ENCODE measurements at regions of chr7 and their contacts with region 1.

Region 1: DNA sequence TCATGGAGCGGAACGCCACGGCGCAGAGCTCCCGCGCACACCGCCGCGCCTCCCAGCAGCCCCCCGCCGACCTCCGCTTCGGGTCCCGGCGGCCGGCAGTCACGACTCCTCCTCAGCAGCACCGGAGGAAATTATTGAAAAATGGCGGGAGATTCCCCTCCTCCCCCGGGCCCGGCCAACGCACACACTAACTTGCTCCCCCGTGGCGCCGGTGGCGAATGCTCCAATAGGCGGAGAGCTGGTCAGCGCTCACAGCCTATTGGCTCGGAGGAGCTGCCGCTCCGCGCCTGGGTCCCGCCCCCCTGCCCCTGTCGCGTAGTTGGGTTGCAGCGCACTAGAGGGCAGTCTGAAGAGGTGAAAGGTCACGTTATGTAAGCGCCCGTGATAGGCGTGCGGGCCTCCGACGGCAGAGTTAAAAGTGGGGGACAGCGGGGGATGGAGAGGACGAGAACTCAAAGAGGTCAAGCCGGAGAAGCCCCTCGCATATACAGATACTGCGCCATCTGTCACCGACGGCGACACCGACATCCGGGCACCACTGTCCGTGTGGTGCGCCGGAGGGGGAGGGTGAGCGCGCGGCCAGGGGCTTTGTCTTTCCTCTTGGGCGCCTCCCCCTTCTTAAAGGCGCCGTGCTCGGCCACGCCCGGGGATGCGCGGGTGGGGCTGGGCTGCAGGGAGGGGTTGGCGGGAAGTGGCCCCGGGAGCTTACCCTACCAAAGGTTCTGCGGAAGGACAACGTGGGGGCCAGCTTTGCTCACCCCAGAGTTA is at the start of gene BAZ1B:
- DNase-seq: peak; percentile 87 to 97 (median 93)
- ATAC-seq: peak; percentile 92 to 95 (median 94)
- H3K4me3 ChIP-seq: peak within 1 kb of the TSS; percentile 74 to 81
- H3K4me3 Mint-ChIP-seq: peak within 1 kb of the TSS; percentile 89 to 94 (median 93)
- H3K27ac ChIP-seq: peak within 1 kb of the TSS; percentile 96
- H3K27ac Mint-ChIP-seq: peak within 1 kb of the TSS; percentile 98 to 100
- H3K4me1 ChIP-seq: peaks cover 42 to 63% of the 10 kb centered on the region in 2 experiments
- H3K4me1 Mint-ChIP-seq: peaks cover 67 to 72% (median 71%) of the 10 kb centered on the region in 3 donors
- H3K27me3 ChIP-seq: no peaks in the 10 kb centered on the region
- H3K27me3 Mint-ChIP-seq: no peaks in the 10 kb centered on the region
- total RNA-seq, gene BAZ1B: 57.1 to 64.5 (median 63.0) TPM

Region 2: DNA sequence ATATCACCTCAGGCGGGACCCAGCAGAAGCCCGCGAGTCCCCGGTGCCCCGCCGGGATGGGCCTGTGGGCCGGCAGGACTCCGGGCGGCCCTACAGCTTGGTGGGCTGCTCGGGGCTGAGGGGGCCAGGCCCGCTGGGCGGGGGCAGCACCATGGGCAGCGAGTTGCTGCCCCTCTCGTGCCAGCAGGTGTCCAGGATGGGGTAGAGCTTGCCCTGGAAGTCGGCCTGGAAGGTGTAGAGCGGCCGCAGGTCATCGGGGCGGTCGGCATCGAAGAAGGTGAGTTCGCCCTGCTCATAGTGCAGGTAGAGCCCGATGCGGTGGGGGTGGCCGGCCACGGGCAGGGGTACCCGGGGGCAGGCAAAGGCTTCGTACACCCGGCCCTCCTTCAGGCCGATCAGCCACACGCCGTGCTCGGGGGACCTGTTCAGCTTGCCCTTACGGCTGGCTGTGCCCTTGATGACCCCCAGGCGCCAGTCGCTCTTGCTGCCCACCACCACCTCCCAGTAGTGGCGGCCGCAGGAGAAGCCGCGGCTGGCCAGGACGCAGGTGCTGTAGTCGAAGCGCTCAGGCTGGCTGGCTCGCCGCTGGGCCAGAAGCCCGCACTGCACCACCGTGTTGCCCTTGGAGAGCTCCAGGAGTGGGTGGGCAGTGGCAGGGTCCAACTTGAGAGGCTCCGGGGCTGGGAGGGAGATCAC is 209.3 kb before region 1 on chr7:
- CTCF ChIA-PET with region 1: no interaction called
- POLR2A ChIA-PET with region 1: no interaction called
- DNase-seq: no peak
- ATAC-seq: no peak
- H3K4me3 ChIP-seq: no peak overlapping the region
- H3K4me3 Mint-ChIP-seq: no peak overlapping the region
- H3K27ac ChIP-seq: no peak overlapping the region
- H3K27ac Mint-ChIP-seq: no peak overlapping the region
- H3K4me1 ChIP-seq: peaks cover 0 to 14% of the 10 kb centered on the region in 2 experiments
- H3K4me1 Mint-ChIP-seq: peaks cover 13 to 19% (median 16%) of the 10 kb centered on the region in 3 donors
- H3K27me3 ChIP-seq: peaks cover 0 to 2% of the 10 kb centered on the region in 2 experiments
- H3K27me3 Mint-ChIP-seq: no peaks in the 10 kb centered on the region

Region 3: GRCh38 chr7:73578342-73579127 is 56.2 kb after region 1 on chr7 and contains the start of gene TBL2:
- CTCF ChIA-PET with region 1: interaction called in 1 of 2 experiments, 5 read pairs
- POLR2A ChIA-PET with region 1: interaction called in 1 of 2 experiments, 10 read pairs
- DNase-seq: peak; percentile 97 to 99 (median 99)
- ATAC-seq: peak; percentile 89 to 96 (median 90)
- H3K4me3 ChIP-seq: peak within 1 kb of the TSS; percentile 85 to 90
- H3K4me3 Mint-ChIP-seq: peak within 1 kb of the TSS; percentile 94 to 99 (median 95)
- H3K27ac ChIP-seq: peak within 1 kb of the TSS; percentile 84
- H3K27ac Mint-ChIP-seq: peak within 1 kb of the TSS; percentile 99 to 100
- H3K4me1 ChIP-seq: peaks cover 10 to 27% of the 10 kb centered on the region in 2 experiments
- H3K4me1 Mint-ChIP-seq: peaks cover 17 to 31% (median 27%) of the 10 kb centered on the region in 3 donors
- H3K27me3 ChIP-seq: no peaks in the 10 kb centered on the region
- H3K27me3 Mint-ChIP-seq: no peaks in the 10 kb centered on the region
- total RNA-seq, gene TBL2: 14.8 to 38.5 (median 31.6) TPM

Region 4: GRCh38 chr7:73638911-73639310 is 116.6 kb after region 1 on chr7:
- CTCF ChIA-PET with region 1: no interaction called
- POLR2A ChIA-PET with region 1: interaction called in 1 of 2 experiments, 11 read pairs
- DNase-seq: no peak
- ATAC-seq: no peak
- H3K4me3 ChIP-seq: no peak overlapping the region
- H3K4me3 Mint-ChIP-seq: no peak overlapping the region
- H3K27ac ChIP-seq: no peak overlapping the region
- H3K27ac Mint-ChIP-seq: no peak overlapping the region
- H3K4me1 ChIP-seq: no peaks in the 10 kb centered on the region
- H3K4me1 Mint-ChIP-seq: no peaks in the 10 kb centered on the region
- H3K27me3 ChIP-seq: peaks cover 0 to 44% of the 10 kb centered on the region in 2 experiments
- H3K27me3 Mint-ChIP-seq: peaks cover 12 to 30% of the 10 kb centered on the region in 2 donors

Region 5: DNA sequence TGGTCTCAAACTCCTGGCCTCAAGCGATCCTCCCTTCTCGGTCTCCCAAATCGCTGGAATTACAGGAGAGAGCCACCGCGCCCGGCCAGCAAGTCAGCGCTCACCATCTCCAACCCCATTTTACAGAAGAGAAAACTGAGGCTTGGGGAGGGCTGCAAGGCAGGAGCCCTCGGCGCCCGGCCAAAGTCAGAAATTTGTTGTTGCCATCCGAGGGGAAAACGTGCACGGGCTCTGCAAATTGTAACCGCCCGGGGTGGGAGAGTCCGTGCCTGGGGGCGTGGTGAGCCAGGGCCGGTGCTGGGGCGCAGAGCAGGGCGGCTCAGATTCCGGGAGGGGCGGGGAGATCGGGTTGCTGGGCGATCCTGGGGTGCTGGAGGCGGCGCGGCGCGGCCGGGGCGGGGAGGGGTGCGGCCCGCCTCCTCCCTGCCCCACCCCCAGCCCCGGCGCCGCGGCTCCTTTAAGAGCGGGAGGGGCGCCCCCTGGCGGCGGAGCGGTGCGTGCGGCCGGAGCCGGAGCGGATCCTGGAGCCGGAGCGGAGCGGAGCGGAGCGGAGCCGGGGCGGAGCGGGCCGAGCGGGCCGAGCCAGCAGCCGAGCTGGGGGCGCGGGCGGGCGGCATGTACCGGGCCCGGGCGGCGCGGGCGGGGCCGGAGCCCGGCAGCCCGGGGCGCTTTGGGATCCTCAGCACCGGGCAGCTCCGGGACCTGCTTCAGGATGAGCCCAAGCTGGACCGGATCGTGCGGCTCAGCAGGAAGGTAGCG is 145.2 kb after region 1 on chr7 and contains the start of gene VPS37D:
- CTCF ChIA-PET with region 1: no interaction called
- POLR2A ChIA-PET with region 1: interaction called in 1 of 2 experiments, 10 read pairs
- DNase-seq: peak; percentile 74 to 97 (median 89)
- ATAC-seq: peak; percentile 94 to 96 (median 95)
- H3K4me3 ChIP-seq: peak within 1 kb of the TSS; percentile 43 to 51
- H3K4me3 Mint-ChIP-seq: peak within 1 kb of the TSS; percentile 61 to 74 (median 71)
- H3K27ac ChIP-seq: no peak within 1 kb of the TSS
- H3K27ac Mint-ChIP-seq: peak within 1 kb of the TSS in 1 of 2 donors; percentile 55
- H3K4me1 ChIP-seq: peaks cover 0 to 12% of the 10 kb centered on the region in 2 experiments
- H3K4me1 Mint-ChIP-seq: peaks cover 5 to 13% (median 12%) of the 10 kb centered on the region in 3 donors
- H3K27me3 ChIP-seq: peaks cover 4 to 74% of the 10 kb centered on the region in 2 experiments
- H3K27me3 Mint-ChIP-seq: peaks cover 26 to 47% of the 10 kb centered on the region in 2 donors
- total RNA-seq, gene VPS37D: 0.36 to 1.1 (median 0.57) TPM

Region 6: GRCh38 chr7:73690646-73691045 is 168.4 kb after region 1 on chr7:
- CTCF ChIA-PET with region 1: no interaction called
- POLR2A ChIA-PET with region 1: no interaction called
- DNase-seq: no peak
- ATAC-seq: no peak
- H3K4me3 ChIP-seq: no peak overlapping the region
- H3K4me3 Mint-ChIP-seq: no peak overlapping the region
- H3K27ac ChIP-seq: no peak overlapping the region
- H3K27ac Mint-ChIP-seq: no peak overlapping the region
- H3K4me1 ChIP-seq: no peaks in the 10 kb centered on the region
- H3K4me1 Mint-ChIP-seq: peaks cover 6 to 17% (median 12%) of the 10 kb centered on the region in 3 donors
- H3K27me3 ChIP-seq: no peaks in the 10 kb centered on the region
- H3K27me3 Mint-ChIP-seq: no peaks in the 10 kb centered on the region

Measured in T-cell (primary cell).